ENCODE measurements at regions of chr11 and their contacts with region 1.

Region 1: GRCh38 chr11:112588252-112588694 is 327.6 kb upstream of the PLET1 start:
- DNase-seq: peak; percentile 40
- ATAC-seq: peak; percentile 78
- H3K4me3 ChIP-seq: no peak overlapping the region
- H3K27ac ChIP-seq: no peak overlapping the region
- H3K4me1 ChIP-seq: peaks cover 16% of the 10 kb centered on the region
- H3K27me3 ChIP-seq: no peaks in the 10 kb centered on the region; a peak in 1 of 4 replicates
- CTCF ChIP-seq: peak; percentile 53 to 79 (median 62)
- EP300 ChIP-seq: no peak
- POLR2A ChIP-seq: no peak
- RAD21 ChIP-seq: peak; percentile 95

Region 2: DNA sequence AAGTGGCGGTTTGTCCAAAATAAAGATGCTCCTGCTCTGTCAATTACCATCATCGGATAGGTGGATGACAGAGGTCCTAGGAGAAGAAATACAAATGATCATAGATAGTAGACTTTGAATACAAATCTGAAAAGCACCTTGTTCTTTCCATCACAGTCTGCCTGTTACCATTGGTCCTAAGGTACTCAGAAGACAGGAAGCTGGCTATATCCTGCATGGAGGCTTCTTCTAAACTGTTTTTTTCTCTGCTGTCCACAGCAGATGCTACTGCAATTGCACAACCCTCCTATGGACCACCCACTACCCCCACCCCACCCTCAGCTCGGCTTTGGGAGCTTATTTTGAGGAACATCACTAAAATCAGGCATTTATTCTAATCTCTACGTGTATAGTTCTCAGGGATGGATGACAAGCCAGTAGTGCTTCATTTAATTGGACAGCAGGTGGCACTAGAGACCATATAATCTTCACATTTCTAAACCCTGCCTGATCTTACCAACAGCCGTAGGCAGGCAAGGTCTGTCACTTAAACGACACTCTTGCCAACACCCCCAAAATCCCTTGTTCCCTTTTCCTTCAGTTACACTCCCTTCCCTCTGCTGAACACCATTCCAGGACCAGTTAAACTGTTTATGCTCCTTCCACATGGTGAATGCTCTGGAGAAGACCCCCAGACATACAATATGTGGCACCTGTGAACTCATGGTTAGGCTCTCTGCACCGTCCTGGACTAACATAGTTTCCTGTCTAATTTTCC is 368.6 kb before region 1 on chr11:
- CTCF ChIA-PET with region 1: interaction called, 4 read pairs
- POLR2A ChIA-PET with region 1: no interaction called
- RAD21 ChIA-PET with region 1: no interaction called
- SMC1A ChIA-PET with region 1: interaction called, 4 read pairs
- in situ Hi-C with region 1: no loop called
- intact Hi-C with region 1: loop called (anchors 5 kb)
- DNase-seq: peak; percentile 56
- ATAC-seq: peak; percentile 98
- H3K4me3 ChIP-seq: no peak overlapping the region
- H3K27ac ChIP-seq: no peak overlapping the region
- H3K4me1 ChIP-seq: no peaks in the 10 kb centered on the region
- H3K27me3 ChIP-seq: no peaks in the 10 kb centered on the region
- CTCF ChIP-seq: peak; percentile 63 to 88 (median 68); a peak in 4 of 6 replicates
- EP300 ChIP-seq: no peak
- POLR2A ChIP-seq: no peak
- RAD21 ChIP-seq: peak; percentile 80

Region 3: DNA sequence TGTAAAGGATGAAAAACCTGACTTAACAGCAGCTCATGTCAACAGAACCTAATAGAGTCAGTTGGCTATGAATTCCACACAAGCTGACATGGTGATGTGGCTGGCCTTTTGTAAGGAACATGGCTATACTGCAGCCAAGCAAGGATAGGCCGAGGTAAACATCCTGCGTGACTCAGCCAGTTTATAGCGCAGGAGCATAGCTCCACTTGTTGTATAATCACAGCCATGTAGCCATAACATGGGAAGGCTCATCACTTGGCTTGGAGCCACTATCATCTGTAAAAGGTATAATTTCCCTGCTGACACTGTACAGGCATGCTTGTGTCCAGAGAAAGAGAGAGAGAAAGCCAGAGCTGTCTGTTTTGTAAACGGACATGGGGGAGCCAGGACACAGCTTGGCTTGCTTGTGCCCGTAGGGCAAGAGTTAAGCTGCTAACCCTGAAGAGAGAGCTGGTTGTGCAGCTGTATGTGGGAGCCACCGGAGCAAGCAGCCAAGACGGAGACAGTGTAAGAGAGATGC is 223.3 kb before region 1 on chr11:
- CTCF ChIA-PET with region 1: no interaction called
- POLR2A ChIA-PET with region 1: no interaction called
- RAD21 ChIA-PET with region 1: no interaction called
- SMC1A ChIA-PET with region 1: no interaction called
- in situ Hi-C with region 1: no loop called
- intact Hi-C with region 1: no loop called
- DNase-seq: no peak
- ATAC-seq: no peak
- H3K4me3 ChIP-seq: no peak overlapping the region
- H3K27ac ChIP-seq: no peak overlapping the region
- H3K4me1 ChIP-seq: no peaks in the 10 kb centered on the region
- H3K27me3 ChIP-seq: no peaks in the 10 kb centered on the region
- CTCF ChIP-seq: no peak
- EP300 ChIP-seq: no peak
- POLR2A ChIP-seq: no peak
- RAD21 ChIP-seq: no peak

Region 4: DNA sequence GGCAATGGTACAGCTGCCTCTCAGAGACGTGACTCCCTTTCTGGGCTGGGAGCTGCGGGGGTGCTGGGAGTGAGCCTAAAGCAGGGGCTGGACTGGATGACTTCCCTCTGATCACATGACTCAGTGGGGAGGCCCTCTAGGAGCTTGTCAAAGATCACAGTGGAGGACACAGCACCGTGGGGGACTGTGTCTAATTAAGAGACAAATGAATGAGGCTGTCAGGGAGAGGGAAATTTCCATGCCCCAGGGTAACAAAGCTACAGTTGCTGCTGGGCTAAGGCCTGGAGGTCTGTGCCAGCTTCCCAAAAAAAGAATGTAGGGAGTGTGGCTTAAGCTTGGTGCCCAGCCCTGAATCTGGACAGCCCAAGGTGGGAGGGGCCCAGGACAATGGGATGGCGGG is 64.8 kb before region 1 on chr11:
- CTCF ChIA-PET with region 1: no interaction called
- POLR2A ChIA-PET with region 1: no interaction called
- RAD21 ChIA-PET with region 1: no interaction called
- SMC1A ChIA-PET with region 1: no interaction called
- in situ Hi-C with region 1: no loop called
- intact Hi-C with region 1: no loop called
- DNase-seq: no peak
- ATAC-seq: no peak
- H3K4me3 ChIP-seq: no peak overlapping the region
- H3K27ac ChIP-seq: no peak overlapping the region
- H3K4me1 ChIP-seq: peaks cover 13% of the 10 kb centered on the region
- H3K27me3 ChIP-seq: peaks cover 0 to 3% of the 10 kb centered on the region in 2 experiments; a peak in 2 of 4 replicates
- CTCF ChIP-seq: no peak
- EP300 ChIP-seq: no peak
- POLR2A ChIP-seq: no peak
- RAD21 ChIP-seq: no peak

Region 5: DNA sequence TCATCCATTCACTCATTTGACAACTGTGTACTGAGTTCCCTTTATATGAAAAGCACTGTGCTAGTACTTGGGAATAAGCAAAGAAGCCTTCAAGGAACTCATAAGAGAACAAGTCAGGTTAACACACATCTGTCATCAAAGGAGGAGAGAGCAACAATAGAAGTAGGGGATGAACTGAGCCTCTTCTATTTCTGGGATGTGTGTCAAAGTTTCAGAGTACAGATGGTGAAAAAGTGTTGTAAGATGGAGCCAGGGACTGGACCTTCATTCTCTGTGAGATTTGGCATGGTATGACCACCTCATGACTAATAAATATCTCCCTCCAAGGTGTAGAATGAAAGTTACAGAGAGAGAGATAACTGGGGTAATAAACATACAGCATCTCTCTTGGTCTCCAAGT is 22.2 kb after region 1 on chr11:
- CTCF ChIA-PET with region 1: interaction called, 11 read pairs
- POLR2A ChIA-PET with region 1: no interaction called
- RAD21 ChIA-PET with region 1: interaction called, 9 read pairs
- SMC1A ChIA-PET with region 1: interaction called, 6 read pairs
- in situ Hi-C with region 1: no loop called
- intact Hi-C with region 1: no loop called
- DNase-seq: no peak
- ATAC-seq: no peak
- H3K4me3 ChIP-seq: no peak overlapping the region
- H3K27ac ChIP-seq: no peak overlapping the region
- H3K4me1 ChIP-seq: peaks cover 12% of the 10 kb centered on the region
- H3K27me3 ChIP-seq: no peaks in the 10 kb centered on the region
- CTCF ChIP-seq: no peak
- EP300 ChIP-seq: no peak
- POLR2A ChIP-seq: no peak
- RAD21 ChIP-seq: no peak

Region 6: DNA sequence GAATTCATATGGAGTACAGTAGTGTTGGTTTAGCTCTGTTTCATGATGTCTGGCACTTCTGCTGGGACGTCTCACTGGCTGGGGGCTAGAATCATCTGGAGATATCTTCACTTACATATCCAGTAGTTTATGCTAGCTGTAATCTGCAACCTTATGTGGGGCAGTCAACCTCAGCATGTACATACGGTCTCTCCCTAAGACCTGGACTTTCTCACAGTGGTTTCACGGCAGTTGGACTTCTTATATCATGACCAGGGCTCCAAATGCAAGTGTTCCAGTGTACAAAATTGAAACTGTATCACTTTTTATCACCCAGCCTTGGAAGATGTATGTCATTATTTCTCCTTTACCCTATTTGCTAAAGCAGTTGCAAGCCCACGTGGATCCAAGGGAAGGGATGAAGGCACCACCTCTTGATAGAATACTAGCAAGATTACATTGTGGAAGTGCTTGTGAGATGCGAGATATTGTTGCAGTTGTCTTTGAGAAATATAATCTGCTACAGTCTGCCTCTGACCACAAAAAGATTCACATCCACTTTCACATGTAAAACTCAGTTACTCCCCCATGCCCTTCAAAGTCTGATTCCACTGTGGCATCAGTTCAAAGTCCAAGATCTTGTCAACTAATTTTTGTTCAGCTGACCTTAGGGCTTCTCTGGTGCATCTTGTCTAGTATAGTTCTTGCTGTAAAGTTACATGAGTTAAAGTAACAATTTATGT is 56.3 kb after region 1 on chr11:
- CTCF ChIA-PET with region 1: interaction called, 6 read pairs
- POLR2A ChIA-PET with region 1: interaction called, 7 read pairs
- RAD21 ChIA-PET with region 1: interaction called, 6 read pairs
- SMC1A ChIA-PET with region 1: interaction called, 17 read pairs
- in situ Hi-C with region 1: no loop called
- intact Hi-C with region 1: no loop called
- DNase-seq: peak; percentile 72
- ATAC-seq: peak; percentile 97
- H3K4me3 ChIP-seq: peak overlapping the region; percentile 29; the same call in 1 of the 2 replicates
- H3K27ac ChIP-seq: peak overlapping the region; percentile 1; the same call in 1 of the 2 replicates
- H3K4me1 ChIP-seq: peaks cover 2% of the 10 kb centered on the region; the same call in 1 of the 2 replicates
- H3K27me3 ChIP-seq: no peaks in the 10 kb centered on the region
- CTCF ChIP-seq: no peak
- EP300 ChIP-seq: 0 out of 4 replicates have a peak, but pooled peaks of 1 of the 2 experiments have one; percentile 45
- POLR2A ChIP-seq: no peak
- RAD21 ChIP-seq: no peak

Region 7: DNA sequence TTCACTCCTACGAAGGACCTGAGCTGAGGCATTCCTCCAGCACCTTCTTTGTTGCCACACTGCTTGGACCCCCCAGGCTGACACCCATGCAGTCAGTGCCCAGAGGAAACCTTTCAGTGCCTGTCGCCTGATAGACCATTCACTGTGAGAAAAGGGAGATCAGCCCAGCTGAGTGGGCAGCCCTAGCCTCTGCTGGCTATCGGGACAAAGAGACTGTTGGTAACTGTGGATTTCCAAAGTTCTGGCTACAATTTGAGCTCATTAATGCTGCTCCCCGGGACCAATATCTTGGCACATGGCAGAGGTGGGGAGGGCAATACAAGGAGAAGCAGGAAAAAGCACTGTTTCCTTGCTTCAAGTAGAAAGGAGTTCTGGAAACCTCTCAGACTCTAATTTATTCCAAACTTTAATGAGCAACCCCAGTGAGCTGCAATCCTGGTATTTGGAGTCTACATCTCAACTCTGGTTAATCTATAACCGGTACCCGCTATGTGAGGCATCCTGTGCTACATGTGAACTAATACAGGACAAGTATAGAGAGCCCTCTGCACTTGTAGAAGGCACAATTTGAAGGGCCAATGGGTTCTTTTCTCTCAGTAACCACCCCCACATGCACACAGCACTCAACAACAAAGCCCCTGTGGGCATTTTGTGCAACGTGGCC is 172.3 kb after region 1 on chr11:
- CTCF ChIA-PET with region 1: interaction called, 8 read pairs
- POLR2A ChIA-PET with region 1: no interaction called
- RAD21 ChIA-PET with region 1: interaction called, 14 read pairs
- SMC1A ChIA-PET with region 1: interaction called, 15 read pairs
- in situ Hi-C with region 1: no loop called
- intact Hi-C with region 1: no loop called
- DNase-seq: no peak
- ATAC-seq: no peak
- H3K4me3 ChIP-seq: no peak overlapping the region
- H3K27ac ChIP-seq: no peak overlapping the region
- H3K4me1 ChIP-seq: peaks cover 12% of the 10 kb centered on the region
- H3K27me3 ChIP-seq: no peaks in the 10 kb centered on the region; a peak in 1 of 4 replicates
- CTCF ChIP-seq: no peak
- EP300 ChIP-seq: no peak
- POLR2A ChIP-seq: no peak
- RAD21 ChIP-seq: no peak

Region 8: GRCh38 chr11:113113801-113114706 is 525.8 kb after region 1 on chr11:
- CTCF ChIA-PET with region 1: interaction called, 5 read pairs
- POLR2A ChIA-PET with region 1: no interaction called
- RAD21 ChIA-PET with region 1: interaction called, 8 read pairs
- SMC1A ChIA-PET with region 1: interaction called, 6 read pairs
- in situ Hi-C with region 1: no loop called
- intact Hi-C with region 1: loop called (anchors 2 kb)
- DNase-seq: no peak
- ATAC-seq: peak; percentile 82
- H3K4me3 ChIP-seq: no peak overlapping the region
- H3K27ac ChIP-seq: no peak overlapping the region
- H3K4me1 ChIP-seq: no peaks in the 10 kb centered on the region
- H3K27me3 ChIP-seq: peaks cover 0 to 3% of the 10 kb centered on the region in 2 experiments; a peak in 1 of 4 replicates
- CTCF ChIP-seq: peak; percentile 44 to 55 (median 44)
- EP300 ChIP-seq: no peak
- POLR2A ChIP-seq: no peak
- RAD21 ChIP-seq: peak; percentile 48

Measured in GM12878 (cell line).